CD4-positive, alpha-beta memory T cell (primary cell): ENCODE measurements at regions of chr10 and their contacts with region 1.

Region 1: GRCh38 chr10:73495884-73496674 is at the start of gene PPP3CB:
- DNase-seq: peak in 4 of 5 donors; percentile 86 to 96 (median 87)
- H3K4me3 ChIP-seq: peak within 1 kb of the TSS; percentile 84 to 92
- H3K4me3 Mint-ChIP-seq: peak within 1 kb of the TSS; percentile 91 to 99 (median 95)
- H3K27ac ChIP-seq: peak within 1 kb of the TSS; percentile 92
- H3K27ac Mint-ChIP-seq: peak within 1 kb of the TSS; percentile 85 to 98 (median 97)
- H3K4me1 ChIP-seq: peaks cover 49% of the 10 kb centered on the region
- H3K4me1 Mint-ChIP-seq: peaks cover 38 to 63% (median 52%) of the 10 kb centered on the region in 4 donors
- H3K27me3 ChIP-seq: no peaks in the 10 kb centered on the region
- H3K27me3 Mint-ChIP-seq: no peaks in the 10 kb centered on the region
- total RNA-seq, gene PPP3CB: 47.4 to 48.1 TPM

Region 2: GRCh38 chr10:73167783-73168464 is 328.2 kb before region 1 on chr10 and contains the starts of genes ECD and FAM149B1:
- CTCF ChIA-PET with region 1: no interaction called
- POLR2A ChIA-PET with region 1: no interaction called
- intact Hi-C with region 1: loop called (anchors 2 kb)
- DNase-seq: peak; percentile 91 to 94 (median 92)
- H3K4me3 ChIP-seq: peak within 1 kb of the TSS; percentile 83 to 96
- H3K4me3 Mint-ChIP-seq: peak within 1 kb of the TSS; percentile 97 to 100 (median 100)
- H3K27ac ChIP-seq: peak within 1 kb of the TSS; percentile 93
- H3K27ac Mint-ChIP-seq: peak within 1 kb of the TSS; percentile 99 to 100 (median 100)
- H3K4me1 ChIP-seq: peaks cover 41% of the 10 kb centered on the region
- H3K4me1 Mint-ChIP-seq: peaks cover 33 to 48% (median 38%) of the 10 kb centered on the region in 4 donors
- H3K27me3 ChIP-seq: no peaks in the 10 kb centered on the region
- H3K27me3 Mint-ChIP-seq: no peaks in the 10 kb centered on the region
- total RNA-seq, gene ECD: 31.1 to 35.3 TPM
- total RNA-seq, gene FAM149B1: 18.1 to 20.5 TPM

Region 3: GRCh38 chr10:73252445-73253224 is 243.4 kb before region 1 on chr10 and contains the start of gene MRPS16:
- CTCF ChIA-PET with region 1: interaction called, 4 read pairs
- POLR2A ChIA-PET with region 1: interaction called, 15 read pairs
- intact Hi-C with region 1: loop called (anchors 2 kb)
- DNase-seq: peak; percentile 92 to 97 (median 94)
- H3K4me3 ChIP-seq: peak within 1 kb of the TSS; percentile 49 to 99
- H3K4me3 Mint-ChIP-seq: peak within 1 kb of the TSS; percentile 95 to 100 (median 98)
- H3K27ac ChIP-seq: peak within 1 kb of the TSS; percentile 82
- H3K27ac Mint-ChIP-seq: peak within 1 kb of the TSS; percentile 94 to 99 (median 97)
- H3K4me1 ChIP-seq: peaks cover 33% of the 10 kb centered on the region
- H3K4me1 Mint-ChIP-seq: peaks cover 22 to 46% (median 34%) of the 10 kb centered on the region in 4 donors
- H3K27me3 ChIP-seq: no peaks in the 10 kb centered on the region
- H3K27me3 Mint-ChIP-seq: no peaks in the 10 kb centered on the region
- total RNA-seq, gene MRPS16: 44.9 to 47.1 TPM

Region 4: GRCh38 chr10:73413528-73414229 is 82.4 kb before region 1 on chr10 and contains the start of gene ANXA7:
- CTCF ChIA-PET with region 1: interaction called, 3 read pairs
- POLR2A ChIA-PET with region 1: interaction called, 34 read pairs
- intact Hi-C with region 1: loop called (anchors 1 kb)
- DNase-seq: peak; percentile 85 to 93 (median 88)
- H3K4me3 ChIP-seq: peak within 1 kb of the TSS; percentile 59 to 82
- H3K4me3 Mint-ChIP-seq: peak within 1 kb of the TSS; percentile 91 to 99 (median 97)
- H3K27ac ChIP-seq: peak within 1 kb of the TSS; percentile 98
- H3K27ac Mint-ChIP-seq: peak within 1 kb of the TSS; percentile 88 to 98 (median 93)
- H3K4me1 ChIP-seq: peaks cover 46% of the 10 kb centered on the region
- H3K4me1 Mint-ChIP-seq: peaks cover 38 to 59% (median 48%) of the 10 kb centered on the region in 4 donors
- H3K27me3 ChIP-seq: no peaks in the 10 kb centered on the region
- H3K27me3 Mint-ChIP-seq: peaks cover 0 to 2% of the 10 kb centered on the region in 2 donors
- total RNA-seq, gene ANXA7: 103 to 111 TPM

Region 5: DNA sequence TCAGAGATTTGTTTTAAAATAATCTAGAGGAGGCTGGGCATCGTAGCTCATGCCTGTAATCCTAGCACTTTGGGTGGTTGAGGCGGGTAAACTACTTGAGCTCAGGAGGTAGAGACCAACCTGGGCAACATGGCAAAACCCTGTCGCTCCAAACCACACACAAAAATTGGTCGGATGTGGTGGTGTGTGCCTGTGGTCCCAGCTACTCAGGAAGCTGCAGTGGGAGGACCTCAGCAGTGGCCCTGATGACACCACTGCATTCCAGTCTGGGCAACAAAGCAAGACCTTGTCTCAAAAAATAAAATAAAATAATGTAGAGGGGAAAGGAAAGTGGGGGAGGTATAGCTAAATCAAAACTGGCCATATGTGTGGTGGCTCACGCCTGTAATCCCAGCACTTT is 13.6 kb after region 1 on chr10:
- CTCF ChIA-PET with region 1: interaction called, 3 read pairs
- POLR2A ChIA-PET with region 1: interaction called, 16 read pairs
- intact Hi-C with region 1: no loop called
- DNase-seq: peak in 3 of 5 donors; percentile 21 to 45 (median 24)
- H3K4me3 ChIP-seq: no peak overlapping the region
- H3K4me3 Mint-ChIP-seq: no peak overlapping the region
- H3K27ac ChIP-seq: no peak overlapping the region
- H3K27ac Mint-ChIP-seq: no peak overlapping the region
- H3K4me1 ChIP-seq: no peaks in the 10 kb centered on the region
- H3K4me1 Mint-ChIP-seq: peaks cover 0 to 5% (median 0%) of the 10 kb centered on the region in 4 donors
- H3K27me3 ChIP-seq: no peaks in the 10 kb centered on the region
- H3K27me3 Mint-ChIP-seq: no peaks in the 10 kb centered on the region

Region 6: GRCh38 chr10:73730153-73730906 is 234.3 kb after region 1 on chr10:
- CTCF ChIA-PET with region 1: no interaction called
- POLR2A ChIA-PET with region 1: interaction called, 12 read pairs
- intact Hi-C with region 1: loop called (anchors 5 kb)
- DNase-seq: peak; percentile 87 to 92 (median 90)
- H3K4me3 ChIP-seq: peak overlapping the region; percentile 78 to 81
- H3K4me3 Mint-ChIP-seq: peak overlapping the region; percentile 98 to 100 (median 100)
- H3K27ac ChIP-seq: peak overlapping the region; percentile 78
- H3K27ac Mint-ChIP-seq: peak overlapping the region; percentile 97 to 100 (median 98)
- H3K4me1 ChIP-seq: peaks cover 15% of the 10 kb centered on the region
- H3K4me1 Mint-ChIP-seq: peaks cover 12 to 39% (median 21%) of the 10 kb centered on the region in 4 donors
- H3K27me3 ChIP-seq: no peaks in the 10 kb centered on the region
- H3K27me3 Mint-ChIP-seq: no peaks in the 10 kb centered on the region

Region 7: DNA sequence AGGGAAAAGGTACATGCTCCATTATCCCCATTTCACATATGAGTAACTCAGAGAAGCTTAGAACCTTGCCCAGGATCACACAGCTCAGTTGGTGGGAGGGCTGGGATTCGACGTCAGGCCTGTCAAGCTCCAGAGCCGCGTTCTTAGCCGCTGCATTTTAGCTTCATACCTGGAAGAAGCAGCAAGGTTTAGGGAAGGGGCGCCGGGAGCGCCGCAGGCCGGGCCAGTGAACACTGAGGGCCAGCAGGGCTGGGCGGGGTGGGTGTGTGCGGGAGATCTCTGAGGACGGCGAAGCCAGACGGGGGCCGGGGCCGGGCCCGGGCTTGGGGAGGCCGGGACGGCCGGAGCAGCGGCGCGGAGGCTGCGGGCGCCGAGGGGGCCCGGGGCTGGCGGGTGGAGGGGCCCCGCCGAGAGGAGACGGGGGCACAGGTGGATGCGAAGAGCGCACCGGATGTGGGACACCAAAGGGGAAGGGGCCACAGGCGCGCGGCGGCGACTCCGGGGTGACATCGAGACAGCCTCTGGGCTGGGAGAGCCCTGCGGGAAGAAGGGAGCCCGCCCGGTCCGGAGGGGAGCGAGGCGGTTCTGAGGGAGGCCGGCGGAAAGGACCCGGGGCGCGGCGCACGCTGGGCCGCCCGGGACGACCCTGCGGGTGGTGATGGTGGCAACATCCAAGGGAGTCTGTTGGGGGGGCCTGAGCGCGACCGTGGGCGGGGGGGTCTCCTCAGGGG is 314.8 kb after region 1 on chr10:
- CTCF ChIA-PET with region 1: no interaction called
- POLR2A ChIA-PET with region 1: no interaction called
- intact Hi-C with region 1: loop called (anchors 1 kb)
- DNase-seq: peak; percentile 64 to 71 (median 69)
- H3K4me3 ChIP-seq: peak overlapping the region; percentile 77 to 81
- H3K4me3 Mint-ChIP-seq: peak overlapping the region; percentile 89 to 95 (median 91)
- H3K27ac ChIP-seq: peak overlapping the region; percentile 88
- H3K27ac Mint-ChIP-seq: peak overlapping the region; percentile 84 to 98 (median 95)
- H3K4me1 ChIP-seq: peaks cover 51% of the 10 kb centered on the region
- H3K4me1 Mint-ChIP-seq: peaks cover 29 to 49% (median 40%) of the 10 kb centered on the region in 4 donors
- H3K27me3 ChIP-seq: no peaks in the 10 kb centered on the region
- H3K27me3 Mint-ChIP-seq: no peaks in the 10 kb centered on the region